Panc1 (cell line): ENCODE measurements at regions of chr4 and their contacts with region 1.

Region 1: DNA sequence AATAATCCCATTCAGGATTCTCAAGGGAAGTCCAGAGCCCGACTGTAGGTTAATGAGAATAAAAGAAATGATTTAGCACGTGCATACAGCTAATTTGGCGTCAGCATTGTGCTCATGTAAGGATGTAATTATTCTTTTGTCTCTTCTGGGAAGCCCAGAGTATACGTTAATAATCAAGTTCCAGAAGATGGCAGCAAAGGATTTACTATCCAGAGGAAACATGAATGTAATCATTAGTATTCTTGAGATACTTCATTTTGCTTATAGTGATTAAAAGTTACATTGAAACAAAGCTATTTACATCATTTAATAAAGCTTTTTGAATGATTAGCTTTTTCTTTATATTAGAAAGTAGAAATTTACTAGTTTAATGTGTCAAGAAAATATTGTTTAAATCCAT is 27.1 kb upstream of the MAP9 start:
- DNase-seq: peak; percentile 20
- ATAC-seq: peak; percentile 63; the same call in 1 of the 2 replicates
- H3K4me3 ChIP-seq: no peak overlapping the region
- H3K27ac ChIP-seq: no peak overlapping the region
- H3K4me1 ChIP-seq: no peaks in the 10 kb centered on the region
- H3K27me3 ChIP-seq: no peaks in the 10 kb centered on the region
- CTCF ChIP-seq: peak; percentile 29; the same call in 1 of the 2 replicates

Region 2: DNA sequence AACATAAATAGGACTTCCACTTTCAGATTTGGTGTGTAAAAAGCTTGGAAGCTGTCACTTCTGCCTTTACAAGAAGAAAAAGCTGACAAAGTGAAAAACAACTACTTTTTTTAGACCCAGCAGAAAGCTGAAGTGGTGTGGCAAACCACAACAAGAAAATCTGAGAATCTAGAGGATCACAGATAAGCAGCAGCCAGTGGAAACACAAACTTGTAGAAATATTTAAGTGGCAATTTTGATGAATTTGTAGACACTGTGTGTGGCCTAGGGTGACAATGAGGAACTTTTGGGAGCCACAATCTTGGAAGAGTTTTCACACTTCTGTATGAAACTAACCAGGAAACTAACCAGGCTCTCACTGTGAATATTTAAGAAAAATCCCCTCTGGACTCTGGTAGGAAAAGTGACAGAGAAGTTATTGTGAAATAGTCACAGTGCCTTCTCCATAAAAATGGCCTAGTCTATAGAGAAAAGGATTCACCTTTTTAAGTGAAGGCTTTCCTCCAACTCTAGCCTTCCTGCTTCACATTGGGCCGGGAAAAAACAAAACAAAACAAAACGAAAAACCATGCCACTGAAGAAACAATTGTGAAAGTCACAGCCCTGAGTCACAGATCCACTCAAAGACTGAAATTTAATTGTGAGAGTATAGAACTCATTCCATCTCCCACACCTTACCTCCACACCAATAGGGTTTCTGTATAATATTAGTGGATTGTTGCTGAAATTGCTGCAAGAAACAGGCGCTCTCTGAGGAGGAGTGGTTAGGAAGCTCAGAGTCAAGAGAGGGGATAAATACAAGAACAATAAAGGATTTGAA is 236.0 kb after region 1 on chr4:
- CTCF ChIA-PET with region 1: no interaction called
- POLR2A ChIA-PET with region 1: no interaction called
- in situ Hi-C with region 1: no loop called
- intact Hi-C with region 1: no loop called
- DNase-seq: no peak
- ATAC-seq: no peak
- H3K4me3 ChIP-seq: no peak overlapping the region
- H3K27ac ChIP-seq: no peak overlapping the region
- H3K4me1 ChIP-seq: no peaks in the 10 kb centered on the region
- H3K27me3 ChIP-seq: no peaks in the 10 kb centered on the region
- CTCF ChIP-seq: no peak

Region 3: GRCh38 chr4:155809835-155810234 is 405.9 kb after region 1 on chr4:
- CTCF ChIA-PET with region 1: interaction called, 11 read pairs
- POLR2A ChIA-PET with region 1: no interaction called
- in situ Hi-C with region 1: no loop called
- intact Hi-C with region 1: no loop called
- DNase-seq: peak; percentile 35
- ATAC-seq: no peak
- H3K4me3 ChIP-seq: no peak overlapping the region
- H3K27ac ChIP-seq: no peak overlapping the region
- H3K4me1 ChIP-seq: no peaks in the 10 kb centered on the region
- H3K27me3 ChIP-seq: no peaks in the 10 kb centered on the region
- CTCF ChIP-seq: peak; percentile 52; the same call in 1 of the 2 replicates

Region 4: DNA sequence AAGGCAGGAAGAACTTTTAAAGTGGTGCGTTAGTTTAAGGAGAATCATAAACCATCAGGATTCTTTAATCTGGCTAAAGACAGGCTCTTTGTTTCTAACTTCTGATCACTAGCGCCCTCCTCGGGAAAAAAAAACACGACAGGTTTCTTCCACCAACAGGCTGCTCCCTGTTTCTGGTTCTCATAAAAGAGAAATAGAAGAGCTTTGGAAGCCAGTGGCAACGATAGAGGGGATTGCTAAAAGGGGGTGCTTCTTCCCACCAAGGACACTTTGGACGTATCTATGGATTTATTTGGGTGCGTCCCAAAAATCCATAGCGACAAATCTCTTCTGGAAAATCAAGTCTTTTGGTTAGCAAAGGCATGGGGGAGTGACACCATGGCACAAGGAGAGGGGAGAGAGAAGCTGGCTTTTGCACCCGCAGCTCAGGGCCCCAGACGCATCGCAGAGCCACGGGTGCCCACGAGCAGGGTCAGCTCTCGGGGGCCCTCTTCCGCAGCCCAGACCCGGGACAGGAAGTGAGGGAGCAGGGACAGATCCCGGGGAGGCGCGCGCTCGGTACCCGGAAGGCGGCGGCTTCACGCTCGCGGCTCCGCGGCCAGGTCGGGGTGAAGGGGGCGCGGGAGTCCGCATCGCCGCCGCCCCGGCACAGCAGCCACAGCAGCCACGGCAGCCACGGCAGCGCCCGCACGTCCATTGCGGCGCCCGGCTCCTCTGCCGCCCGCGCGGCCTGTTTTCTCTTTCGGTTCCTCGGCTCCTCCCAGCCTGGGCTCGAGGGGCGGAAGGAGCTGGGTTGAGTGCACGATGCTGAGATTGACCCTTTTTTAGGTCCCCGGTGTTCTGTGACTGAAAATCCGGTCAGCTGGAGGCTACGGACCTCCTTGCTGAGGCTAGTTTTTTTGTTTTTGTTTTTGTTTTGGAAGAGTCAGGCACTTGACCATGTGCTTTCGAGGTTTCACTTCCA is 549.5 kb after region 1 on chr4 and contains the start of gene CTSO:
- CTCF ChIA-PET with region 1: no interaction called
- POLR2A ChIA-PET with region 1: no interaction called
- in situ Hi-C with region 1: no loop called
- intact Hi-C with region 1: loop called (anchors 5 kb)
- DNase-seq: peak; percentile 59
- ATAC-seq: peak; percentile 99
- H3K4me3 ChIP-seq: peak within 1 kb of the TSS; percentile 53 to 89
- H3K27ac ChIP-seq: peak within 1 kb of the TSS; percentile 83
- H3K4me1 ChIP-seq: no peaks in the 10 kb centered on the region
- H3K27me3 ChIP-seq: no peaks in the 10 kb centered on the region
- CTCF ChIP-seq: peak; percentile 67
- total RNA-seq, gene CTSO: 3.3 TPM